ENCODE measurements at regions of chr19 and their contacts with region 1.

Region 1: GRCh38 chr19:38891771-38892170 is 7.6 kb downstream of the SIRT2 start:
- DNase-seq: no peak
- H3K4me3 Mint-ChIP-seq: no peak overlapping the region
- H3K27ac Mint-ChIP-seq: no peak overlapping the region
- H3K4me1 Mint-ChIP-seq: no peaks in the 10 kb centered on the region
- H3K27me3 Mint-ChIP-seq: no peaks in the 10 kb centered on the region

Region 2: GRCh38 chr19:38683393-38684080 is 208.2 kb before region 1 on chr19:
- CTCF ChIA-PET with region 1: no interaction called
- intact Hi-C with region 1: no loop called
- DNase-seq: peak; percentile 61
- H3K4me3 Mint-ChIP-seq: no peak overlapping the region
- H3K27ac Mint-ChIP-seq: no peak overlapping the region
- H3K4me1 Mint-ChIP-seq: peaks cover 56% of the 10 kb centered on the region
- H3K27me3 Mint-ChIP-seq: no peaks in the 10 kb centered on the region

Region 3: GRCh38 chr19:38718747-38719543 is 172.8 kb before region 1 on chr19:
- CTCF ChIA-PET with region 1: no interaction called
- intact Hi-C with region 1: no loop called
- DNase-seq: no peak
- H3K4me3 Mint-ChIP-seq: no peak overlapping the region
- H3K27ac Mint-ChIP-seq: no peak overlapping the region
- H3K4me1 Mint-ChIP-seq: no peaks in the 10 kb centered on the region
- H3K27me3 Mint-ChIP-seq: no peaks in the 10 kb centered on the region

Region 4: GRCh38 chr19:38862321-38863059 is 29.3 kb before region 1 on chr19:
- CTCF ChIA-PET with region 1: interaction called, 19 read pairs
- intact Hi-C with region 1: no loop called
- DNase-seq: no peak
- H3K4me3 Mint-ChIP-seq: no peak overlapping the region
- H3K27ac Mint-ChIP-seq: no peak overlapping the region
- H3K4me1 Mint-ChIP-seq: peaks cover 37% of the 10 kb centered on the region
- H3K27me3 Mint-ChIP-seq: no peaks in the 10 kb centered on the region

Region 5: GRCh38 chr19:38877781-38878574 is 13.8 kb before region 1 on chr19 and contains the start of gene RINL:
- CTCF ChIA-PET with region 1: interaction called, 54 read pairs
- intact Hi-C with region 1: no loop called
- DNase-seq: peak; percentile 88
- H3K4me3 Mint-ChIP-seq: peak within 1 kb of the TSS; percentile 98
- H3K27ac Mint-ChIP-seq: peak within 1 kb of the TSS; percentile 99
- H3K4me1 Mint-ChIP-seq: peaks cover 29% of the 10 kb centered on the region
- H3K27me3 Mint-ChIP-seq: no peaks in the 10 kb centered on the region
- total RNA-seq, gene RINL: 107 to 117 TPM

Region 6: DNA sequence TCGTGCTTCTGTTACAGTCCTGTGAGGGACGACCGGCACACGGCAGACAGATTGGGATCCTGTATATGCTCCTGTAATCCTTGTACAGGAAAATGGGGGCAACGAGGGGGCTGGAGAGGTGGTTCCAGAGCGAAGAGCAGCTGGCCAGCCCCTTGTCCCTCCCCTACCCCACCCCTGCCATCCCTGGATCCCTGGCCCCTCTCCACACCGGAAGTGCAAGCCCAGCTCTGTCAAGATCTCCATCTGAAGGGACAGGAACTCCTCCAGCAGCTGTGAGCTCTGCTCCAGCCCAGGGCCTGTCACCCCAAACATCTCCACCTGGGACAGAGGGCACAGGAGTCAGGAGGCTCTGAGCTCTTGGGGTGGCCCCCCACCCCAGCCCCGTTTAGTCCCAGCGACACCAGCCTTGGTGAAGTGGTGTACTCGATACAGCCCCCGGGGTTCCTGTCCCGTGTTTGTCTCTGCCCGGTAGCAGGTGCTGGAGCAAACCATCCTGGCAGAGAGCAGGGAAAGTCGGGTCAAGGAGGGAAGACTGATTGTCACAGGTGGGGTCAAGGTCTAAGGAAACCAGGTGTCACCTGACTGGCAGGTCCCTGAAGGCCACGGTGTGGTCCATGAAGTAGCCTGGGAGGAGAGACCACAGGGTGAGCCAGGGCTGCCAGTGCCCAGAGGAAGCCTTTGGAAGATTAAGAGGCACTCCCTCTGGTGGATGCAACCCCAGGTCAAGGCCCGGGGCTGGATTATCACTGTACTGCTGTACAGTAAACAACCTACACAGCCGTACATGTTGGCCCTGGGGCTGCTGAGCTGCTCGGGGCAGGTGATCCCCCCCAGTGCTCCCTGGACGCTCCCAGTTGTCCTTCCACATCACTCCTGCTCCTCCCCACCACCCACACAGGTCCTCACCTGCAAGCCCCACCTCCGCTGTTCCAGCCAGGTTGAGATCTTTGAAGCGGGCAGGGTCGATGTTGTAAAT is 26.0 kb after region 1 on chr19:
- CTCF ChIA-PET with region 1: no interaction called
- intact Hi-C with region 1: no loop called
- DNase-seq: no peak
- H3K4me3 Mint-ChIP-seq: no peak overlapping the region
- H3K27ac Mint-ChIP-seq: no peak overlapping the region
- H3K4me1 Mint-ChIP-seq: peaks cover 1% of the 10 kb centered on the region
- H3K27me3 Mint-ChIP-seq: no peaks in the 10 kb centered on the region